ENCODE measurements at regions of chr3 and their contacts with region 1.

Region 1: DNA sequence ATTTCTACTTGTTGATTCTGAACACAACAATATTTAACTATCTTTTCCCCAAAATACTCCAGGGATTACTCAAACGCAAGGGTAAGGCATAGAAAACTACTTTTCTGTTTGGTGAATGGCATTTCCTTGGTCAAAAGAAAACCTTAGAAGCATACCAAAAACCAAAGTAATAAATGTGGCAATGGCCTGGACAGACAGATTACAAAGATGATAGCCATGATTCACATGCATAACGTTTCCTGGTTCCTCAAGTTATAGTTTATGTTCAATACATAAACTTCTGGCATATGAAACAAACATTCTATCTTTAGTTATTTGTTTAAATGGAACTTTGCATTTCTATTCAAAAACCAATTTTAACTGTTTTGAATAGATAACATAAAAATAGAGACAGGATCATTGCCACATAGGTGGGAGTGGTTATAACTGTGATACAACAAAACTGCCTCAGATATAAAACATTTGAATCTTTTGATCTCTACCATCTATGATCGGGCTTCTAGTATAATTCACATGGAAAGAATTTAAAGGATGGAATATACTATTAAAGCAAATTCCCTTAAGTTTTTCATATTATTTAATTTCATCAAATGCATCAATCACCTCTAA is 32.1 kb downstream of the FOXP1 start:
- DNase-seq: peak; percentile 55
- H3K4me3 ChIP-seq: no peak overlapping the region
- H3K27ac ChIP-seq: no peak overlapping the region
- H3K4me1 ChIP-seq: peaks cover 10% of the 10 kb centered on the region
- H3K27me3 ChIP-seq: no peaks in the 10 kb centered on the region
- CTCF ChIP-seq: no peak

Region 2: DNA sequence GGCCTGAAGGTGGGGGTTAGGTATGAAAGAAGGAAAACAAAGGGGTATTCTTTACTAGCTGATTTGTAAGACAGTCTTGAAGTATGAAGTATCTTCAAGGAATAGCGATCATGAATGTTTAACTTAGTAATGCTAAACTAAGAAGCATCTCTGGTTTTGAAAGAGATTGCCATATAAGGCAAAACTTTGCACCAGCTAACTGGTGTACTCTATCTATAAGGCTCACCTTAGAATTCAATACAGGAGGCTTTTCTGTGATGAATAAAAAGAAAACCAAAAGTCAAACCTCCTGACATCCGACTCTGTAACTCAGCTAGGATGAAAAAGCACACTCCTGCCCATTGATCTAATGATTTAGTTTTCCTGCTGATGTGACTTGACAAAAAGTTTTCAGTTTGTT is 22.6 kb before region 1 on chr3:
- CTCF ChIA-PET with region 1: no interaction called
- dilution Hi-C with region 1: no loop called
- in situ Hi-C with region 1: no loop called
- intact Hi-C with region 1: loop called (anchors 1 kb)
- DNase-seq: no peak
- H3K4me3 ChIP-seq: no peak overlapping the region
- H3K27ac ChIP-seq: no peak overlapping the region
- H3K4me1 ChIP-seq: peaks cover 29% of the 10 kb centered on the region
- H3K27me3 ChIP-seq: no peaks in the 10 kb centered on the region
- CTCF ChIP-seq: no peak

Region 3: DNA sequence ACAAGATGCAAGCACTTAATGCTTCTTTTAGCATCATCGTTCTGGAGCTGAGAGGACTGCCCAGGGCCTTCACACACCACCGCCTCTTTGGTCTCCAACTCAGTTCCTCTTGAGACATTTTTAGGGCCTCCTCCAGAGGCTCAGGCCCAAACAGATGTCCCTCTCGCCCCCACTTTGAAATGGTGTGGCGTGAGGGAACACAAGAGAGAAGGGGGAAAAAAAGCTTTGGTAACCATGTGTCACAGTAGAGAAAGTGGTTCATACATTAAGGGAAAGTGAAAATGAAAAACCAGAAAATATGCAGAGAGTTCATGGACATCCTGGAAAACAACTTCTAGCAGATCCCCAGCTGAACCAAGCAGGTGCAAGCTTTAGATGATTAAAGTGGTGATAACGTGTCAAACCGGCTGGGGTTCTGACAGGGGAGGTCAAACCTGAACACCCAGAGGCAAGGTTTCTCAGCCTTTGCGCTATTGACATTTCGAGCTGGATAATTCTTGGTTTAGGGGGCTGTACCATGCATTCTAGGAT is 65.2 kb after region 1 on chr3:
- CTCF ChIA-PET with region 1: no interaction called
- dilution Hi-C with region 1: no loop called
- in situ Hi-C with region 1: no loop called
- intact Hi-C with region 1: no loop called
- DNase-seq: no peak
- H3K4me3 ChIP-seq: no peak overlapping the region
- H3K27ac ChIP-seq: no peak overlapping the region
- H3K4me1 ChIP-seq: no peaks in the 10 kb centered on the region
- H3K27me3 ChIP-seq: peaks cover under 1% of the 10 kb centered on the region
- CTCF ChIP-seq: no peak

Region 4: GRCh38 chr3:72606005-72606800 is 1054.8 kb after region 1 on chr3:
- CTCF ChIA-PET with region 1: no interaction called
- dilution Hi-C with region 1: no loop called
- in situ Hi-C with region 1: no loop called
- intact Hi-C with region 1: no loop called
- DNase-seq: no peak
- H3K4me3 ChIP-seq: no peak overlapping the region
- H3K27ac ChIP-seq: no peak overlapping the region
- H3K4me1 ChIP-seq: no peaks in the 10 kb centered on the region
- H3K27me3 ChIP-seq: peaks cover 3% of the 10 kb centered on the region
- CTCF ChIP-seq: no peak

Measured in mammary epithelial cell (primary cell).